Right ventricle myocardium superior (tissue), 1 donor: ENCODE measurements at regions of chr3 and their contacts with region 1.

Region 1: GRCh38 chr3:5442106-5442785 is 254.7 kb downstream of the EDEM1 start:
- DNase-seq: no peak
- ATAC-seq: no peak

Region 2: DNA sequence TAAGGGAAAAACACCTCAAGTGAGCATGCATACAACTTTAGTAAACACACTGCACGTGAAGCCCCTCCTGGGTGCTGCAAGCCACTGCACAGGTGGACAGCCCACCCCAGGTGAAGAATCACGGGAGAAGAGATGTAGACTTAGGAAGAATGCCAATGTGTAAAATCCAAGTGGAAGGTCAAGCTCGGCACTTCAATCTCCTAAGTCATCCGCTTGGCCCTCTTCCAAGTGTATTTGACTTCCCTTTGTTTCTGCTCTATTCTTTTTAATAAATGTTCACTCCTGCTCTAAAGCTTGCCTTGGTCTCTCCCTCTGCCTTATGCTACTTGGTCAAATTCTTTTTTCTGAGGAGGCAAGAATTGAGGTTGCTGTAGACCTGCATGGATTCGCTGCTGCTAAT is 61.9 kb after region 1 on chr3:
- intact Hi-C with region 1: loop called (anchors 10 kb)
- DNase-seq: no peak
- ATAC-seq: no peak